Body of pancreas (tissue), 4 donors: ENCODE measurements at regions of chr11 and their contacts with region 1.

Region 1: GRCh38 chr11:66570117-66570819 is 1.9 kb upstream of the CTSF start:
- DNase-seq: no peak
- ATAC-seq: no peak
- H3K4me3 ChIP-seq: no peak overlapping the region
- H3K27ac ChIP-seq: no peak overlapping the region
- H3K4me1 ChIP-seq: peaks cover 15% of the 10 kb centered on the region
- H3K27me3 ChIP-seq: no peaks in the 10 kb centered on the region
- CTCF ChIP-seq: no peak
- POLR2A ChIP-seq: no peak

Region 2: GRCh38 chr11:66530927-66531709 is 39.1 kb before region 1 on chr11:
- intact Hi-C with region 1: no loop called
- DNase-seq: no peak
- ATAC-seq: no peak
- H3K4me3 ChIP-seq: no peak overlapping the region
- H3K27ac ChIP-seq: no peak overlapping the region
- H3K4me1 ChIP-seq: no peaks in the 10 kb centered on the region
- H3K27me3 ChIP-seq: no peaks in the 10 kb centered on the region
- CTCF ChIP-seq: no peak
- POLR2A ChIP-seq: no peak

Region 3: DNA sequence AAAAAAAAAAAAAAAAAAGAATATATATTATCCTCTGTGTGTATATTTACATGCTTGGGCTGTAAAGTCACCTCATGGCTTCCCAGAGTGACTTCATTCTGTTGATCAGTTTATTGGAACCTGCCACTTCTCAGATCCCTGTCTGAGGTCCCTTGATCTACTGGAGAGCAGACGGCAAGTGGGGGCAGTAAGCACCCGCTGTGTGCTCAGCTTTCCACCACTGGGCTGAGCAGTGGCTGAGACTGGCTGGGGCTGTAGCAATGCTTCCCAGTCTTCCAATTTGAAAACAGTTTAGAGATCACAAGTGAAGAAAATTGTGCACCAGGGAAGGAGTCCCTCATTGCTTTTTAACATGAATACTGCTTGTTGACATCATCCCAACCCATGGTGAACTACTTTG is 114.4 kb after region 1 on chr11:
- intact Hi-C with region 1: loop called (anchors 5 kb)
- DNase-seq: no peak
- ATAC-seq: no peak
- H3K4me3 ChIP-seq: no peak overlapping the region
- H3K27ac ChIP-seq: no peak overlapping the region
- H3K4me1 ChIP-seq: no peaks in the 10 kb centered on the region
- H3K27me3 ChIP-seq: no peaks in the 10 kb centered on the region
- CTCF ChIP-seq: no peak
- POLR2A ChIP-seq: no peak

Region 4: DNA sequence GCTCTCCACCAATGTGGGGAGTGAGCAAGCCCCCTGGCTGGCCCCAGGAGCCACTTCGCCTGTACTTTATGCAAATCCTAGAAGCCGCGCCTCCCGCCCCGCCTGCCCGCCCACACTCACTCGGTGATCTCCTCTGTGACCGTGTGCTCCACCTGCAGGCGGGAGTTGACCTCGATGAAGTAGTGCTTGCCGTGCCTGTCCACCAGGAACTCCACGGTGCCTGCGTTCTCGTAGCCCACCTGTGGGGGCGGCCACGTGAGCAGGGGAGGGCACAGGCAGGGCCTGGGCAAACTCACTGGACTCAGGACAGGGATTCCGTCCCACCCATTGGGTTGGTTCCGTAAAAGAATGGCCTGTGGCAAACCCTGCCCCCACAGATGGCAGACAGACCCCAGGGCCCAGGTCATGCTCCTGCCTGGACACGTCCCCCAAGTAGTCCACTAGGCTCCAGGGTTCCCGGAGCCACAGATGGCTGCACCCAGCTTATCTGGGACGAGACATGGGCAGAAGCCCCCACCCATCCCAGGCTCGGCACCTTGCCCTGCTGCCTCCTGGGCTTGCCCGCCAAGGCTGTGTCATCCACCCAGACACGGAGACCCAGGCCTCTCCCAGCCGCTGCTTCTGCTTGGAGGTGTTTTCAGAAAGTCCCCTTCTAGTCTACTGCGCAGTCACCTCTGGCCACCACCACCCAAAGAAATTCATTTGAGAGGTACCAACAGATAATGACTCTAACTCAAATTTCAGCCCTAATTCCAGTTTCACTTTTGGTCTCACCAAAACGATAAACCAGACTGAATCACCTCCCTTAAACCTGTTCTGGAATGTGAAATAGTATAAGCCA is 298.7 kb after region 1 on chr11:
- intact Hi-C with region 1: no loop called
- DNase-seq: peak; percentile 81 to 83 (median 82)
- ATAC-seq: peak; percentile 88
- H3K4me3 ChIP-seq: no peak overlapping the region
- H3K27ac ChIP-seq: no peak overlapping the region
- H3K4me1 ChIP-seq: peaks cover 6% of the 10 kb centered on the region
- H3K27me3 ChIP-seq: no peaks in the 10 kb centered on the region
- CTCF ChIP-seq: peak; percentile 24 to 78 (median 58)
- POLR2A ChIP-seq: no peak